HEK293 (cell line): ENCODE measurements at regions of chr2 and their contacts with region 1.

Region 1: DNA sequence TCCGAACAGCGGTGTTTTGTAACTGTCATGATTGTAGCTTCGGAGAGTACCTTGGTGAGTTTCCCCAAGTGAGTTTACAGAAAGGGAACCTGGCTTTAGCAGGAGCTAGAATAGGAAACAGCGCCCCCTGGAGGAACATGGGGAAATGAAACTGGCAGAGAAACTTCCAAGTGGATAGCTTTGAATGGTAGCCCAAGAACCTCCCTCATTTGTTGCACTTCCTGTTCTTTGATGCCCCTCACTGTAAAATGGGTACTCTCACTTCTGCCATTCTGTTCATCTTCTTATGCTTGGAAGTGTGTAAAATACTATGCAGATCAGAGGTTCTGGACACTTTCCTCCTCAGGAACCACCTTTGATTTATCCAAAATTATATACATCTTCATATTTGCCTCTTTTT is 36.2 kb downstream of the CHST10 start:
- H3K4me3 ChIP-seq: no peak overlapping the region
- H3K27ac ChIP-seq: no peak overlapping the region
- H3K4me1 ChIP-seq: no peaks in the 10 kb centered on the region
- CTCF ChIP-seq: peak; percentile 55

Region 2: DNA sequence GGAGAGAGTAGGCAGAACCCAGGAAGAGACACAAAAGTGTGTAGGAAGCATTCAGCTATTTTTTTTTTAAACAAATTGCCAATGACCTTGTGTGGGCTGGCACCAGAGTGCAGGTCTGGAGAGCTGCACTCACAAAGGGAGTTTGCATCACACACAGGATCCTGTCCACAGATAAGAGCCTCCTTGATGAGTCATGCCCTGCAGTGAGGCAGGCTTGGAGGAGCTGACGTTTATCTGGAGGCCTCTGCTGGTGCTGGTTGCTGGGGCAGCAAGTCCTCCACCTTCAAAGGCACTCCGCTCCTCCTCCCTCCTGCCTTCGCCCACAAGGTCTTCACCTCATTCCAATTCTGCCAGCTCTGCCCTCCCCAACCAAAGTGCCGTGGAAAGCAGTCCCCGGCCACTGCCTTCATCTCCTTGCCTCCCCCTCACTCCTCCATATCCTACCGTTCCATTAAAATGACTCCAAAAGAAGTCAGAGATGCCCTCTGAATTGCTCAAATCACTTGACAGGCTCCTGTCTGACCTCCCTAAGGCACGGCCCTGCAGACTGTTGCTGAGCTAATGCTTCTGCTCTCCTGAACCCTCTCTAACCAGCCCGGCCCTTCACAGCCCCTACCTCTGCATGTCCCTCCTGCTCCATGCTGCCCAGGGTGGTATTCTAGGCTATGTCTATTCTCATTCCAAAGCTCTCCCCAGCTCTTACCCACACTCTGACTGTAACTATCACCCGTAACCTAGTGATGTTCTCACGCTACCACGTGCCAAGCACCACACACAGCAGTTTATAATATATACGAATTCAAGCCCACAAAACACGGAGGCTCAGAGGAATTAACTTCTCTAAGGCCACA is 89.9 kb before region 1 on chr2:
- CTCF ChIA-PET with region 1: interaction called, 18 read pairs
- POLR2A ChIA-PET with region 1: no interaction called
- H3K4me3 ChIP-seq: no peak overlapping the region
- H3K27ac ChIP-seq: peak overlapping the region; percentile 54
- H3K4me1 ChIP-seq: peaks cover 16% of the 10 kb centered on the region
- CTCF ChIP-seq: no peak

Region 3: GRCh38 chr2:100365434-100365833 is 15.8 kb before region 1 on chr2:
- CTCF ChIA-PET with region 1: interaction called, 48 read pairs
- POLR2A ChIA-PET with region 1: no interaction called
- H3K4me3 ChIP-seq: no peak overlapping the region
- H3K27ac ChIP-seq: no peak overlapping the region
- H3K4me1 ChIP-seq: no peaks in the 10 kb centered on the region; the same call in 1 of the 2 replicates
- CTCF ChIP-seq: no peak

Region 4: DNA sequence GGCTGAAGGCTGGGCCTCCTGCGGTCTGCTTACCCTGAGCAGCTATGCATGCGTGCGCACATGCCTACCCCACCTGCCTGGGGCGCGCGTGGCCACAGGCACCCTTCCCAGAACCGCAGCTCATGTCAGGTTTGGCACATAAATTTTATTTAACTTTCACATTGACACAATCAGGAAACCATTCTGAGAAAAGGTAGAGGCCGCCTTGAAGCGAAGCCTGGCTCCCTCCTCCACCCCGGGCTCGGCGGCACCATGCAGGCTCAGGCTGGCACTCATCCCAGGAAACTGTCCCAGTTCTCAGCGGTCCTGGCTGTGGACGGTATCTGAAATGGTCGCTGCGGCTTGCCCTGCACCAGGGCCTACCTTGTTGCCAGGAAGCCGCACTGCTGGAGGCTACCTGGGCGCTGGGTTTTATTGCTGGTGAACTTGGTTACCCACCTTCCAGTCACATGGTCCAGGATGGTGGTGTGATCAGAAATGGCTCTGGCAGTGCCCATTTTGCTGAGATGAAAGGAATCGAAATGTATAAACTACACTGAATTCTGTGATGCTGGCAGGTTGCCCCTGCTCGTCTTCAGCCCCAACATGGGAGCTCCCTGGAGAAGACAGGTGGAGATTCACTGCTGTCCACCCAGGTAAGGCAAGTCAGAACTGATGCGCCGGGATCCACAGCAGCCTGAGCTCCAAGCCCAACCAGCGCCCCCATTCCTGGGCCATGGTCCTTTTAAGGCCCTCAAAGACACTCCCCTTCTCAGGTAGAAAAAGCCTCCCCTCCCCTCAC is 10.7 kb after region 1 on chr2:
- CTCF ChIA-PET with region 1: interaction called, 23 read pairs
- POLR2A ChIA-PET with region 1: no interaction called
- H3K4me3 ChIP-seq: no peak overlapping the region
- H3K27ac ChIP-seq: no peak overlapping the region
- H3K4me1 ChIP-seq: no peaks in the 10 kb centered on the region
- CTCF ChIP-seq: no peak